Esophagus squamous epithelium (tissue), 5 donors: ENCODE measurements at regions of chr10 and their contacts with region 1.

Region 1: DNA sequence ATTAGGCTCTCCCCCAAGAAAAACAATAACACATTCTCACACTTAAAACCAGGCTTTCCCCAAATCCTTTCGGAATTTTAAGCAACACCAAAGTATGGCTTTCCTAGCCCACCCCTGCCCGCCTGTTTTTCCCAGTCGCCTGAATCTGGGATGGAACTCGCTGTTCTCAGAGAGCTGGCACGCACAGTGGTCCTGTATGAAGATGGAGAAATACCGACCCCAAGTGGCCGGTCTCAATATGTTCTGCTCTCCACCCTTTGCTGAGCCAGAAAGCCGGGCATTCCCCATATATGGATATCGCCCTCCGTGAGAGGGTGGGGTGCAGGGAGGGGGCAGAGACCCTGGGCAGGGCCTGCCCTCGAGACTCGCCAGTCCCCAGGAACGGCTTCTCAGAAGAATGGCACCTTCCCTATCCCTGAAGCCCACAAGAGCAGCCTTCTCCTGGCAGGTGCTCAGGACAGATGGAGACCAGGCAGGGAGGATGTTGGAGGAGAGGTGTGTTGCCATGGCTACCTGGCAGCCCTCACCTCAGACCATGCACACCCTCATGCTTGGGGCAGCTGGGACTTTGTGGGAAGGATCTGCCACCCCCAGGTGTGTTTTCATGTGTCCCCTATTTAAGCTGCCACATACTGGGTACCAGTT is 3.4 kb downstream of the TACR2 start:
- DNase-seq: no peak
- H3K4me3 ChIP-seq: peak overlapping the region in 1 of 4 donors; percentile 58
- H3K27ac ChIP-seq: peak overlapping the region in 3 of 4 donors; percentile 65 to 94 (median 84)
- H3K4me1 ChIP-seq: peaks cover 5 to 42% (median 11%) of the 10 kb centered on the region in 3 donors
- H3K27me3 ChIP-seq: no peaks in the 10 kb centered on the region
- CTCF ChIP-seq: peak; percentile 31 to 69 (median 52)
- POLR2A ChIP-seq: no peak

Region 2: GRCh38 chr10:69009360-69009759 is 404.0 kb before region 1 on chr10:
- intact Hi-C with region 1: no loop called
- DNase-seq: no peak
- H3K4me3 ChIP-seq: no peak overlapping the region
- H3K27ac ChIP-seq: no peak overlapping the region
- H3K4me1 ChIP-seq: peaks cover 0 to 8% (median 0%) of the 10 kb centered on the region in 3 donors
- H3K27me3 ChIP-seq: no peaks in the 10 kb centered on the region
- CTCF ChIP-seq: no peak
- POLR2A ChIP-seq: no peak

Region 3: GRCh38 chr10:69494626-69495558 is 81.5 kb after region 1 on chr10:
- intact Hi-C with region 1: loop called (anchors 5 kb)
- DNase-seq: no peak
- H3K4me3 ChIP-seq: no peak overlapping the region
- H3K27ac ChIP-seq: peak overlapping the region in 3 of 4 donors; percentile 44 to 55 (median 53)
- H3K4me1 ChIP-seq: peaks cover 0 to 30% (median 8%) of the 10 kb centered on the region in 3 donors
- H3K27me3 ChIP-seq: no peaks in the 10 kb centered on the region
- CTCF ChIP-seq: no peak
- POLR2A ChIP-seq: no peak

Region 4: GRCh38 chr10:69506834-69507721 is 93.7 kb after region 1 on chr10:
- intact Hi-C with region 1: loop called (anchors 5 kb)
- DNase-seq: no peak
- H3K4me3 ChIP-seq: peak overlapping the region in 3 of 4 donors; percentile 21 to 57 (median 23)
- H3K27ac ChIP-seq: peak overlapping the region; percentile 13 to 67 (median 62)
- H3K4me1 ChIP-seq: peaks cover 0 to 18% (median 9%) of the 10 kb centered on the region in 3 donors
- H3K27me3 ChIP-seq: no peaks in the 10 kb centered on the region
- CTCF ChIP-seq: no peak
- POLR2A ChIP-seq: no peak

Region 5: GRCh38 chr10:69639291-69640195 is 226.2 kb after region 1 on chr10:
- intact Hi-C with region 1: loop called (anchors 10 kb)
- DNase-seq: peak; percentile 11
- H3K4me3 ChIP-seq: peak overlapping the region in 1 of 4 donors; percentile 12
- H3K27ac ChIP-seq: peak overlapping the region; percentile 68 to 77 (median 74)
- H3K4me1 ChIP-seq: peaks cover 8 to 46% (median 23%) of the 10 kb centered on the region in 3 donors
- H3K27me3 ChIP-seq: peaks cover 0 to 8% (median 0%) of the 10 kb centered on the region in 4 donors
- CTCF ChIP-seq: peak; percentile 68 to 90 (median 86)
- POLR2A ChIP-seq: no peak